Body of pancreas (tissue), 4 donors: ENCODE measurements at regions of chr11 and their contacts with region 1.

Region 1: DNA sequence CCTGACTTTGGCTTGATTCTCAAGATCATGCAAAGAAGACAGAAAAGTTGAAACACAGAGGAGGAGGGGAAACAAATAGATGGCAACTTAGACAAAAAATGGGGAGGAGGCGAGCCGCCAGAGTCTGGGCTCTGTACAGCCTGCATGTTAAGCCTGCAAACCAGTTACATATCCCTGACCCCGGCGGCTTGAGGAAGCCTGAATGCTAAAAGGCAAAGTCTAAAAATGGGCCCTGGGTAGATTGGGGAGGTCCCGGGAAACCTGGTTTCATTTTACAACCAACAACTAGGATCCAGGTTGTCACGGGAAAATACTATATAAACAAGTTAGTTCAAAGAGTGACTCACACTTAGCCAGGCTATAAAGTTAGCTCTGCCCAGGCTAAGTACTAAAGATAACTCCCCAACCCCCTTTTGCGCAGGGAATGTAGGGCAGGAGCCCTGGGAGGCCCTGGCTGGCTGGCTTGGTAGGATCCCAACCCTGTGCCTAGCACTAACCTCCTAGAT is 18.8 kb upstream of the ZBTB16 start:
- DNase-seq: peak in 1 of 4 donors; percentile 56
- ATAC-seq: no peak
- H3K4me3 ChIP-seq: no peak overlapping the region
- H3K27ac ChIP-seq: peak overlapping the region in 1 of 4 donors; percentile 28
- H3K4me1 ChIP-seq: peaks cover 12% of the 10 kb centered on the region
- H3K27me3 ChIP-seq: no peaks in the 10 kb centered on the region
- CTCF ChIP-seq: no peak
- POLR2A ChIP-seq: no peak

Region 2: GRCh38 chr11:114180301-114181055 is 139.7 kb after region 1 on chr11:
- intact Hi-C with region 1: no loop called
- DNase-seq: peak; percentile 81 to 89 (median 86)
- ATAC-seq: peak; percentile 54
- H3K4me3 ChIP-seq: no peak overlapping the region
- H3K27ac ChIP-seq: peak overlapping the region; percentile 92 to 99 (median 97)
- H3K4me1 ChIP-seq: peaks cover 87% of the 10 kb centered on the region
- H3K27me3 ChIP-seq: no peaks in the 10 kb centered on the region
- CTCF ChIP-seq: peak; percentile 64 to 94 (median 90)
- POLR2A ChIP-seq: peak in 1 of 3 donors; percentile 37

Region 3: GRCh38 chr11:114257621-114258558 is 217.1 kb after region 1 on chr11:
- intact Hi-C with region 1: loop called (anchors 10 kb)
- DNase-seq: peak; percentile 39 to 56 (median 48)
- ATAC-seq: peak; percentile 8
- H3K4me3 ChIP-seq: no peak overlapping the region
- H3K27ac ChIP-seq: peak overlapping the region in 1 of 4 donors; percentile 50
- H3K4me1 ChIP-seq: peaks cover 41% of the 10 kb centered on the region
- H3K27me3 ChIP-seq: no peaks in the 10 kb centered on the region
- CTCF ChIP-seq: peak in 1 of 7 experiments; percentile 7
- POLR2A ChIP-seq: no peak